IMR-90 (cell line): ENCODE measurements at regions of chr9 and their contacts with region 1.

Region 1: DNA sequence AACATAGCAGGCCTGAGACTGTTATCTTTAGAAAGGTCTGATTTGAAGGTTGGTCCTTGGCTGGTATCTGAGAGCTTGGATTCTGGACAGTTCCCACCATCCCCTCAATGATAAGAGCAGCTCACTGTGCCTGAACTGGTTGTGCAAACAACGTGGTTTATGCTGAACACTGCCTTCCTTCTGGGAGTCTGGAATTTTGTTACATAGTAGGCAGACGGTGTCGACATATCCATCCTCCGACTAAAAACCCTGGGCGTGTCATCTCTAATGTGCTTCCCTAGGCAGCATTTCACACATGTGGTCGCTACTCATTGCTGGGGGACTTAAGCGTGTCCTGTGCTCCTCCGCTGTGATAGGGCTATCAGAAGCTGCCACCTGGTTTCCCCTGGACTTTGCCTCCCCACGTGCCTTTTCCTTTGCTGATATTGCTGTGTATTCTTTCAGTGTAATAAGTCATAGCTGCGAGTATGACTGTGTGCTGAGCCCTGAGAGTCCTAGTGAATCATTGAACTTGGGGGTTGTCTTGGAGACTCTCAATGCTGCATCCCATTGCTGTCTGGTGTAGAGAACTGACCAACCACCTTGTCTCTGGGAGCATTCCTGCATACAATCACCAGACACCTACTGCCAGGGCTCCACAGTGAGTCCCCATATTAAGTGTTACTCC is 119.1 kb upstream of the TBC1D2 start:
- DNase-seq: peak; percentile 96
- ATAC-seq: peak; percentile 93
- H3K4me3 ChIP-seq: no peak overlapping the region
- H3K27ac ChIP-seq: peak overlapping the region; percentile 46; the same call in 1 of the 2 replicates
- H3K4me1 ChIP-seq: peaks cover 17% of the 10 kb centered on the region
- H3K27me3 ChIP-seq: no peaks in the 10 kb centered on the region
- CTCF ChIP-seq: no peak
- POLR2A ChIP-seq: peak; percentile 43; the same call in 1 of the 2 replicates
- RAD21 ChIP-seq: peak; percentile 18; the same call in 1 of the 2 replicates

Region 2: DNA sequence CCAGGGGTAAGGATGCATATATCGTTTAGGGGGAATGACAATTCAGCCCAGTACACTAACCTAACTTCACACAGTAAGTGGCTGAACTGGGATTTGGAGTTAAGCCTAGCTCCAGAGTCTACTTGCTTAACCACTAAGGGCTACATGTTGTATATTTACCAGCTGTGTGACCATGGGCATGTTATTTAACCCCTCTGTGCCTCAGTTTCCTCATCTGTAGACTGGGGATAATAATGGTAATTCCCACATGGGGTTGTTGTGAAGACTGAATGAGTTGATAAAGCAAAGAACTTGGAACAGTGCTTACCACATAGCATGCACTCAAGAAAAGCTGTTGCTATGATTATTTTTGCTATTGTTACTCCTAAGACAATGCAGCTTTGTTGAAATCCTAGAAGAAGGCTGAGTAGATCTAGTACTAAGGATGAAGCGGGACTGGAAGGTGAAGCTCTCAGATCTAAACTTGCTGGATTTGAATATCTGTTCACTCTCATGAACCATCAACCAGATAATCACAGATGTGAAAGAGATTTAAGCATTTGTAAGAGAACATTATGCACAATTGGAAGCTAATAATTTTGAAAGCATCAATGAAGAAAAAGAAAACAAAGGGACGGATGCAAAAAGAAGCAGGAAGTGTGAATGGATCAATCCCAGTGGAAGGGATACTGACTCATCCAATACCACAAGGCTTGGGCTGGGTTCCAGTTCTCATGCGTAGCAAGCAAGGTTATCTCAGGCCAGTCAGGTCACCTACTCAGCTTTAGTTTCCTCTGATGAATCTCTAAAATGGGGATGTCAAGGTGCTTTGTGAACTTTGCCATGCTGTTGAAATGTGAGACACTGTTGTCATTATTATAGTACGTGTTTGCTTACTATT is 40.6 kb before region 1 on chr9:
- CTCF ChIA-PET with region 1: no interaction called
- POLR2A ChIA-PET with region 1: no interaction called
- dilution Hi-C with region 1: no loop called
- in situ Hi-C with region 1: no loop called
- intact Hi-C with region 1: loop called (anchors 5 kb)
- DNase-seq: peak; percentile 93
- ATAC-seq: peak; percentile 59
- H3K4me3 ChIP-seq: no peak overlapping the region
- H3K27ac ChIP-seq: no peak overlapping the region
- H3K4me1 ChIP-seq: peaks cover 12% of the 10 kb centered on the region
- H3K27me3 ChIP-seq: no peaks in the 10 kb centered on the region
- CTCF ChIP-seq: no peak
- POLR2A ChIP-seq: no peak
- RAD21 ChIP-seq: no peak

Region 3: DNA sequence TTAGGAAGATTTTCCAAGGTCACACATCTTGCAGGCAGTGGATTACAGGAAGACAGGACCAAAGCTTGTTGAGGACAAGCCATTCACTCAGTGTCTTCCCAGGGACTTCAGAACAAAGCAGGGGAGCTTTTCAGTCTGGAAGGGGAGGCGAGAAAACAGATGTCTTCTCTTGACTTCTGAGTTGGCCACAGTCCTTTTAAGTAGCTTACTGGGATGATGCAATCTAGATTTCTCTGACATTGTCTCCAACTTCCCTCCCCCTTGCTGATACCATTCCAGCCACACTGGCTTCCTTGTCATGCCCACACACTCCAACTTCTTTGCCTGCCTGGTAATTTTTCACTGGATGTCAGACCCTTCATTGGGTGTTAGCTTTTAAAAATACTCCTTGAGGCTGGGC is 55.1 kb after region 1 on chr9:
- CTCF ChIA-PET with region 1: no interaction called
- POLR2A ChIA-PET with region 1: no interaction called
- dilution Hi-C with region 1: no loop called
- in situ Hi-C with region 1: no loop called
- intact Hi-C with region 1: no loop called
- DNase-seq: peak; percentile 80
- ATAC-seq: peak; percentile 63
- H3K4me3 ChIP-seq: no peak overlapping the region
- H3K27ac ChIP-seq: no peak overlapping the region
- H3K4me1 ChIP-seq: peaks cover 12% of the 10 kb centered on the region
- H3K27me3 ChIP-seq: no peaks in the 10 kb centered on the region
- CTCF ChIP-seq: no peak
- POLR2A ChIP-seq: no peak
- RAD21 ChIP-seq: no peak